ENCODE measurements at regions of chr11 and their contacts with region 1.

Region 1: GRCh38 chr11:83156150-83156995 is 558 bp upstream of the PCF11 start:
- DNase-seq: peak; percentile 96 to 99 (median 97)
- H3K4me3 ChIP-seq: peak overlapping the region; percentile 94
- H3K4me3 Mint-ChIP-seq: peak overlapping the region; percentile 98 to 100 (median 100)
- H3K27ac ChIP-seq: peak overlapping the region; percentile 99
- H3K27ac Mint-ChIP-seq: peak overlapping the region; percentile 99 to 100 (median 100)
- H3K4me1 ChIP-seq: peaks cover 11% of the 10 kb centered on the region
- H3K4me1 Mint-ChIP-seq: peaks cover 25 to 34% (median 28%) of the 10 kb centered on the region in 3 donors
- H3K27me3 ChIP-seq: no peaks in the 10 kb centered on the region
- H3K27me3 Mint-ChIP-seq: peaks cover 0 to 6% of the 10 kb centered on the region in 2 donors

Region 2: GRCh38 chr11:83063073-83063754 is 93.2 kb before region 1 on chr11:
- CTCF ChIA-PET with region 1: no interaction called
- POLR2A ChIA-PET with region 1: interaction called, 16 read pairs
- DNase-seq: peak in 2 of 5 donors; percentile 28 to 61
- H3K4me3 ChIP-seq: peak overlapping the region; percentile 17
- H3K4me3 Mint-ChIP-seq: peak overlapping the region; percentile 81 to 93 (median 88)
- H3K27ac ChIP-seq: peak overlapping the region; percentile 13
- H3K27ac Mint-ChIP-seq: peak overlapping the region; percentile 74 to 98 (median 93)
- H3K4me1 ChIP-seq: peaks cover 16% of the 10 kb centered on the region
- H3K4me1 Mint-ChIP-seq: peaks cover 24 to 45% (median 39%) of the 10 kb centered on the region in 3 donors
- H3K27me3 ChIP-seq: no peaks in the 10 kb centered on the region
- H3K27me3 Mint-ChIP-seq: no peaks in the 10 kb centered on the region

Region 3: GRCh38 chr11:83115551-83115950 is 40.8 kb before region 1 on chr11:
- CTCF ChIA-PET with region 1: interaction called, 4 read pairs
- POLR2A ChIA-PET with region 1: interaction called, 22 read pairs
- DNase-seq: no peak
- H3K4me3 ChIP-seq: peak overlapping the region; percentile 36
- H3K4me3 Mint-ChIP-seq: peak overlapping the region; percentile 17 to 98 (median 86)
- H3K27ac ChIP-seq: no peak overlapping the region
- H3K27ac Mint-ChIP-seq: peak overlapping the region in 4 of 8 donors; percentile 31 to 84 (median 70)
- H3K4me1 ChIP-seq: peaks cover 46% of the 10 kb centered on the region
- H3K4me1 Mint-ChIP-seq: peaks cover 37 to 65% (median 41%) of the 10 kb centered on the region in 3 donors
- H3K27me3 ChIP-seq: no peaks in the 10 kb centered on the region
- H3K27me3 Mint-ChIP-seq: no peaks in the 10 kb centered on the region

Region 4: DNA sequence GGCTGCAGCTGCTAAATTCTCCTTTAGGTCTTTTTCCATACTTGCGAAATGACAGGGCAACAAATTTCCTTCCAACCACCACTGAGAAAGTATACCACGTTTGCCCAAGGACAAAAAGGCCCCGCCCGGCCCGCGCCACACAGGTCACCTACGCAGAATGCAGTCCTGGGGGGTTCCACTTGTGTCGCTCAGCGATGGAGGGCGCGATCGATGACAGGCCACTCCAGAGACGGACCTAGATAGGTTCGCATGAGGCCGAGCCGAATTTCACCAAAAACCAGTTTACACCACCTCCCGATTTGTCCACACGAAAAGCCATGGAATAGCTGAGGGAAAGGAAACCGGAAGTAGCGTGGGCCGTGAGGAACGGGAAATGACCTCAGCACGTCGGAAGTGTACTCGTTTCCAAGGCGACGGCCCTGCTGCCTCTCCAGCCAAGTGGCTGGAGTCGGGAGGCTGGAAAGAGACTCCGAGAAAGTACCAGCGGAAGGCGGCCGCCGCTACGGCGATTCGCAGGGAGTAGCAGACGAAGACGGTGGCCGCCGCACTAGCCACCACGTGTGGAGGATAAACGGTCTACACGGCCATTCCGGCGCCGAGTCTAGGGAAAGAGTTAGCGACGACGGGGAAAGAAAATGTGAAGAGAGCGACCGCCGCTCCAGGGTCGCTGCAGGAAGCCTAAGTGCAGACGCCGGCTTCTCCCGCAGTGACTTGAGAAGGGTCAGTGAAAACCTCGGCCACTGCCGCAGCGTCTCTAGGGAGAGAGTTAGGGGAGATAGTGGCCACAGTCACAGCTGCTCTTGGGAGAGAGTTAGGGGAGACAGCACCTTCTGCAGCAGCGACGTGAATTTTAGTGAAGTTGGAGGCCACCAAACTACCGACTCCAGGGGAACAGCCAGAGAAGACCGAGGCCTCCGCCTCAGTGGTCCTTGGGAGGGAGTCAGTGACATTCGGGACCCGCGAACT is 37.2 kb after region 1 on chr11 and contains the start of gene ANKRD42:
- CTCF ChIA-PET with region 1: interaction called, 6 read pairs
- POLR2A ChIA-PET with region 1: interaction called, 22 read pairs
- DNase-seq: peak; percentile 79 to 92 (median 89)
- H3K4me3 ChIP-seq: peak within 1 kb of the TSS; percentile 96
- H3K4me3 Mint-ChIP-seq: peak within 1 kb of the TSS; percentile 98 to 100 (median 99)
- H3K27ac ChIP-seq: peak within 1 kb of the TSS; percentile 99
- H3K27ac Mint-ChIP-seq: peak within 1 kb of the TSS; percentile 98 to 100 (median 100)
- H3K4me1 ChIP-seq: peaks cover 34% of the 10 kb centered on the region
- H3K4me1 Mint-ChIP-seq: peaks cover 50 to 65% (median 59%) of the 10 kb centered on the region in 3 donors
- H3K27me3 ChIP-seq: no peaks in the 10 kb centered on the region
- H3K27me3 Mint-ChIP-seq: peaks cover 0 to 3% of the 10 kb centered on the region in 2 donors
- total RNA-seq, gene ANKRD42: 9.7 to 10.3 TPM

Region 5: DNA sequence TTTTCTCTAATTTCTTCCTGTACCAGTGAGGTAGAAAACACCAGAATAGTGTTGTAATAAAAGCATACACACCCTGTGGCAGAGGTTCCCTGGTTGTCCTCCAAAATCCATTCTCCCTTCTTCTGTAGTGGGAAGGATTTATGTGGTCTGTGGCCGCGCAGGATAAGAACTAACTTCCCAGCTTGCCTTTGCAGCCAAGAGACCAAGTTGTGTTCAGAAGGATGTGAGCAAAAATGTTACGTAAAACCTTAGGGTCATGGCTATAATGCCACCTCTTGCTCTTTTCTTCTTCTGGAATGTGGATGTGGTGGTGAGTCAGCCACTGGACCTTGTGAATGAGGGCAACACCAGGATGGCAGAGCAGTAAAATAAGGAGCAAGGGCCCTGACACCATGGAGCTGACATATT is 101.4 kb after region 1 on chr11:
- CTCF ChIA-PET with region 1: no interaction called
- POLR2A ChIA-PET with region 1: no interaction called
- DNase-seq: no peak
- H3K4me3 ChIP-seq: no peak overlapping the region
- H3K4me3 Mint-ChIP-seq: no peak overlapping the region
- H3K27ac ChIP-seq: no peak overlapping the region
- H3K27ac Mint-ChIP-seq: peak overlapping the region in 4 of 8 donors; percentile 23 to 59 (median 48)
- H3K4me1 ChIP-seq: no peaks in the 10 kb centered on the region
- H3K4me1 Mint-ChIP-seq: no peaks in the 10 kb centered on the region
- H3K27me3 ChIP-seq: no peaks in the 10 kb centered on the region
- H3K27me3 Mint-ChIP-seq: no peaks in the 10 kb centered on the region